OCI-LY7 (cell line): ENCODE measurements at regions of chr4 and their contacts with region 1.

Region 1: GRCh38 chr4:145481164-145481941 is at the start of gene SMAD1:
- DNase-seq: peak; percentile 76
- H3K4me3 ChIP-seq: peak within 1 kb of the TSS; percentile 88
- H3K27ac ChIP-seq: peak within 1 kb of the TSS; percentile 82
- H3K4me1 ChIP-seq: peaks cover 43% of the 10 kb centered on the region
- CTCF ChIP-seq: no peak
- total RNA-seq, gene SMAD1: 56.4 and 60.9 TPM in 2 replicates

Region 2: GRCh38 chr4:145097821-145098674 is 383.3 kb before region 1 on chr4 and contains the starts of genes ABCE1 and ANAPC10:
- CTCF ChIA-PET with region 1: no interaction called
- POLR2A ChIA-PET with region 1: no interaction called
- intact Hi-C with region 1: loop called (anchors 5 kb)
- DNase-seq: peak; percentile 99
- H3K4me3 ChIP-seq: peak within 1 kb of the TSS; percentile 79
- H3K27ac ChIP-seq: peak within 1 kb of the TSS; percentile 80
- H3K4me1 ChIP-seq: peaks cover 52% of the 10 kb centered on the region
- CTCF ChIP-seq: peak; percentile 50
- total RNA-seq, gene ABCE1: 108 and 119 TPM in 2 replicates
- total RNA-seq, gene ANAPC10: 34.1 and 46.1 TPM in 2 replicates

Region 3: GRCh38 chr4:145234091-145234706 is 247.2 kb before region 1 on chr4:
- CTCF ChIA-PET with region 1: interaction called, 3 read pairs
- POLR2A ChIA-PET with region 1: no interaction called
- intact Hi-C with region 1: loop called (anchors 1 kb)
- DNase-seq: peak; percentile 88
- H3K4me3 ChIP-seq: no peak overlapping the region
- H3K27ac ChIP-seq: no peak overlapping the region
- H3K4me1 ChIP-seq: peaks cover 11% of the 10 kb centered on the region
- CTCF ChIP-seq: peak; percentile 100

Region 4: DNA sequence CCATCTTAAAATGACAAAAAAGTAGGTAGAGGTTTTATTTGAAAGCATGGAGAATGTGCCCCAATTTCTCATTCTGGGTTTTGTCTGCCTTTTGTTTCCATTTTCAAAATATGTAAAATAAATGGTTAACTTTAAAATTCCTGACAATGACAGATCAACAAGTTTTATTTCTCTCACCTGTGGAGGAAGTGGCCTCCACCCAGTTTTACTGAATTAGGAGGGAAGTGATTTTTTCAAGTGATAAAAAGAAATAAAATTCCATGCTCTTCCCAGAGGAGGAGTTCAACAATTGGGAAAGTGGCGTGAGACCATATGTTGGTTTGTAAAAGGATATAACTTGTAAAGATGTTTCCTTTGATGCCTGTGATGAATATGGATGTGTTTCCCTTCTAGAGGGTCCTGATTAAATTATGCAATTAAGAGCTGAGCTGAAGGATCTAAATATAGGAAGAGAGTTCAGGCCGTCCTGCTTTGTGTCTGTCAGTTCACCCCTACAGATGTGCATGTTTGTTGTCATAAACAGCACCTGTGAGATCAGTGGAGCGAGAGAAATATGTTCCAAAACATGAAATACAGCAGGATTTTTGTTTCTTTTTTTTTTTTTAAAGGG is 19.8 kb after region 1 on chr4:
- CTCF ChIA-PET with region 1: interaction called, 4 read pairs
- POLR2A ChIA-PET with region 1: interaction called, 48 read pairs
- intact Hi-C with region 1: loop called (anchors 1 kb)
- DNase-seq: peak; percentile 96
- H3K4me3 ChIP-seq: peak overlapping the region; percentile 51
- H3K27ac ChIP-seq: peak overlapping the region; percentile 99
- H3K4me1 ChIP-seq: peaks cover 100% of the 10 kb centered on the region
- CTCF ChIP-seq: 0 out of 2 replicates have a peak, but pooled peaks have one; percentile 3

Region 5: GRCh38 chr4:145552181-145552822 is 70.9 kb after region 1 on chr4:
- CTCF ChIA-PET with region 1: interaction called, 3 read pairs
- POLR2A ChIA-PET with region 1: interaction called, 11 read pairs
- intact Hi-C with region 1: loop called (anchors 2 kb)
- DNase-seq: peak; percentile 58
- H3K4me3 ChIP-seq: peak overlapping the region; percentile 45
- H3K27ac ChIP-seq: peak overlapping the region; percentile 71
- H3K4me1 ChIP-seq: peaks cover 36% of the 10 kb centered on the region
- CTCF ChIP-seq: no peak

Region 6: DNA sequence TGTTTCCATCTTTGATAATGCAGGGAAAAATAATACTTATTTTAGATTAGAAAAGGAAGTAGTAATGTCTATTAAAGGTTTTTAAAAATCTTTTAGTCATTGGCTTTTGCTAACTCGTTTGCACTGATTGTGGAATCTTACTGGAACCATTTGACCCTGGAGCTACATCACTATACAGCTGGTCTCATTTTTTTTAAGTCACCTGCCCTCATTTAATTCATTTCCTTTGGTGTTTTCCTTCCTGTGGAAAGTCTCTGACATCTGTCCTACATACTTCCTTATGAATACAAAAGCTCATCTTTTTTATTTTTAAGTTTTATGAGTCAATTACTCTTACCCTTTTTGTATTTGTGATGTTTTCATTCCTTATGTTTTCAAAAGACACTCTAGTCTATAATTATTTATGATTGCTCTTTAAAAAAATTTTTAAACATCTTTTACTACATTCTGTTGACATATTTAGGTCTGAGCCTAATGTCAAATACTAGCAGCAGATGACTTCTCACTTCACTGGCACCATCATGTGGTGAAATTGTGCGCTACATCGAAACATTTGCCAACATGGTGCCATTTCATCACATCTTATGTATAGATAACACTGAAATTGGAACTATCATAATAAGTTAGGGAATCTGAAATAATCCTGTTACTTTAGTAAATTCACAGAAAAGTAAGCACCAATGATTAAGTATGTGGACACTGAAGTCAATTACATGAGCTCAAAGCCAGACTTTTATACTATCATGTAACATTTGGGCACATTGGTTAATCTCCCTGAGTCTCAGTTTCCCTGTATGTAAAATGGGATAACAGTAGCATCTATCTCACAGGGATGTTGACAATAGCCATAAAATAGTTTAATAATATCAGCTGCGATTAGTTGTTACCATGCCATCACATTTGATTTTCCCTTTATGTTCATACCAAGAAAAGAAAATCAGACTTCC is 128.4 kb after region 1 on chr4:
- CTCF ChIA-PET with region 1: no interaction called
- POLR2A ChIA-PET with region 1: interaction called, 3 read pairs
- intact Hi-C with region 1: loop called (anchors 2 kb)
- DNase-seq: peak; percentile 85
- H3K4me3 ChIP-seq: no peak overlapping the region
- H3K27ac ChIP-seq: peak overlapping the region; percentile 5
- H3K4me1 ChIP-seq: peaks cover 9% of the 10 kb centered on the region
- CTCF ChIP-seq: peak; percentile 99

Region 7: DNA sequence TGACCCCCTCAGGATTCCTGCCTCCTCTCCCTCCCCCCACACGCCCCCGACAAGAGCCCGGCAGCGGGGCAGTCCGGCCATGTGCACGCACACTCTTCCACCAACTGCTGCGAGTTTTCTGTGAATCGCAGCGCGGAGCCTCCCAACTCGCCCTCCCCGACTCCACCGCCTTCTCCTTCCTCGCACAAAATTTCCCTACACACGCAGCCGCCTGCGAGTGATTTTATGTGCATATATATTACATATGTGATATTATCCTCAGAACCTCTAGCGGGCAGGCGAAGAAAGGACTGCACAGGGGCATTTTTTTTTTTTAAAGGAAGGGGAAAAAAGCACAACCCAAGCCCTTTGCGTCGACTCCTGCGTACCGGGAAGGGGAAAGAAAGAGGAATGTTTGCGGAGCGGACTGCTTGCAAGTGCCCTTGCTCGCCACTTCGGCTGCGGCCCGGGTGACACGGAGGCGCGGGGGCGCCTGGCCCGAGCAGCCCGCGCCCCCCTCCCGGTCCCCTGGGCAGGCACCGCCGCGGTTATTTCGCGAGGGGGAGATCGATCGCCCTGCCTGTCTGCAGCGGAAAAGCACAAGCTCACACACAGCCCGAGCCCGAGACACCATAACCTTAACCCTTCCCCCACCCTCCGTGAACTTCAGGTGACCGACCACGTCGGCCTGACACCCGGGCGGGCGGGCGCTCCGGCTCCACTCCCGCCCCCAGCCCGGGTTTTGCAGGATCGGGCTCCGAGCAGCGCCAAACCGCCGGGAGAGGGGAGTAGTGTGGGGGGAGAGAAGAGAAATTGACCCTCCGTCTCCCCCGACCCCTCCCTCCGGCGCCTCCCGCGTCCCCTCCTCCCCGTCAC is 455.0 kb after region 1 on chr4:
- CTCF ChIA-PET with region 1: no interaction called
- POLR2A ChIA-PET with region 1: no interaction called
- intact Hi-C with region 1: loop called (anchors 5 kb)
- DNase-seq: peak; percentile 89
- H3K4me3 ChIP-seq: peak overlapping the region; percentile 87
- H3K27ac ChIP-seq: peak overlapping the region; percentile 92
- H3K4me1 ChIP-seq: peaks cover 58% of the 10 kb centered on the region
- CTCF ChIP-seq: peak; percentile 67